OCI-LY7 (cell line): ENCODE measurements at regions of chr5 and their contacts with region 1.

Region 1: DNA sequence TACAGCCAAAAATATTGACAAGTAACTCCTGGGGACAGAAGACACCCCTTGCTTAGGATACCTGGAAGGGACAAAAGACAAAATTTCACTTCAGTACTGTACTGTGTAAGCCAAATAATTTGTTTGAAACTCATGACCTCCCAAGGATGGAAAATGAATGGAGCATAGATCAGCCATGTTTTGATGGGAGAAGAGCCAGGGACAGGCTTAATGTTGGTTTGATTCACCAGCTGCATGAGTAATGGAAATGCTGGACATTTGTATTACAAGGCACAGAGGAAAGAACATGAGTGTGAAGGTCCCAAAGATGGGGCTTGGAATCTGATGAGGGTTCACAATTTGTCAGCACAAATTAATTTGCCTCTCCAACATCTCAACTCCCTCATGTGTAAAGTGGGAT is 122.8 kb downstream of the ENC1 start:
- DNase-seq: no peak
- H3K4me3 ChIP-seq: no peak overlapping the region
- H3K27ac ChIP-seq: no peak overlapping the region
- H3K4me1 ChIP-seq: no peaks in the 10 kb centered on the region
- CTCF ChIP-seq: no peak

Region 2: DNA sequence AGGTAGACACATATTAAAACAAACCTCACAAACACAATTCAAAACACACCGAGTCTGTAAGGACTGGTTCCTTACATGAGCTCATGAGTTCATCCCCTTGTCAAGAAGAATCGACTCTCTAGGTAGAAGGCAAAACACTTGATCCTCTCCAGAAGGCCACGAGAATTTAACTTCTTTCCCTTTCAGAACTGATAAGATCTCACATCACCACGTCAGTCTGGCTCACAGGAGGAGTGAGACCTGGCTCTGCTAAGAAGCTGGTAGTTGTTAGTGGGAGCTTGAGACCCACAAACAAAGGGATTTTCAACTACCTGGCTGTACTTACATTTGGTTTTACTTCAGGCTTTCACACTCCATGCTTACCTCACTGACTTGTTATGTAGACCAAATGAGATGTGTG is 432.5 kb before region 1 on chr5:
- CTCF ChIA-PET with region 1: interaction called, 14 read pairs
- POLR2A ChIA-PET with region 1: no interaction called
- intact Hi-C with region 1: no loop called
- DNase-seq: no peak
- H3K4me3 ChIP-seq: no peak overlapping the region
- H3K27ac ChIP-seq: no peak overlapping the region
- H3K4me1 ChIP-seq: no peaks in the 10 kb centered on the region
- CTCF ChIP-seq: no peak